ENCODE measurements at regions of chr15 and their contacts with region 1.

Region 1: GRCh38 chr15:74540761-74541493 is at the start of gene ARID3B:
- DNase-seq: peak; percentile 94 to 98
- H3K4me3 ChIP-seq: peak within 1 kb of the TSS; percentile 91
- H3K4me3 Mint-ChIP-seq: peak within 1 kb of the TSS; percentile 87
- H3K27ac Mint-ChIP-seq: peak within 1 kb of the TSS; percentile 86
- H3K4me1 ChIP-seq: peaks cover 12% of the 10 kb centered on the region
- H3K4me1 Mint-ChIP-seq: peaks cover 13% of the 10 kb centered on the region
- H3K27me3 ChIP-seq: no peaks in the 10 kb centered on the region
- H3K27me3 Mint-ChIP-seq: no peaks in the 10 kb centered on the region
- CTCF ChIP-seq: no peak
- total RNA-seq, gene ARID3B: 36.1 and 37.0 TPM in 2 replicates

Region 2: DNA sequence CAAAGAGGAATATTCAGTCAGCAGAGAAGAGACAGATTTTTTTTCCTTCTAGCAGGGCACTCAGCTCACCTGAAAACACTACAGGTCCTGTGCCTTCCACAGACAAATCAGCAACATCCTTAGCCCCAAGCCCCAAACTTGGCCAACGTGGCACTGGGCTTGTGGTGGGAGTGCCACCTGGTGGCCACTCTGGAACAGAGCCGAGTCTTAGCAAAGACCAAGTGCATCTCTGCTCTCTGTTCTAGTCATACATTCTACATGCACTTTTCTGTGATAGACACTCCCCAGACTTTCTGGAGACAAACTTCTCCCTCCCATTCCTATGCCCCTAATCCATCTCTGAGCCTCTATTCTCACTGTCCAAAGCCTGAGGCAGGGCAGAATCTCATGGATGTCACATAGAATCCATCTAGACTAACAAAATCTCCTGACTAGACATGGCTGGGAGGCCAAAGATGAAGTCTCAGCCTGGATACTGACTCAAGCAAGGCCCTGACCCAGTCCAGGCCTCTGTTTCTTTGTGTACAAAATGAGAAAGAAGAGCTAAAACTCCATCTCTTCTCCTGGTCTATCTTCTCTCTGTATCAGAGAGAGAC is 102.1 kb before region 1 on chr15:
- CTCF ChIA-PET with region 1: no interaction called
- POLR2A ChIA-PET with region 1: interaction called, 6 read pairs
- intact Hi-C with region 1: loop called (anchors 5 kb)
- DNase-seq: peak; percentile 77 to 81
- H3K4me3 ChIP-seq: no peak overlapping the region
- H3K4me3 Mint-ChIP-seq: no peak overlapping the region
- H3K27ac Mint-ChIP-seq: peak overlapping the region; percentile 90
- H3K4me1 ChIP-seq: peaks cover 45% of the 10 kb centered on the region
- H3K4me1 Mint-ChIP-seq: peaks cover 45% of the 10 kb centered on the region
- H3K27me3 ChIP-seq: no peaks in the 10 kb centered on the region
- H3K27me3 Mint-ChIP-seq: no peaks in the 10 kb centered on the region
- CTCF ChIP-seq: peak; percentile 81 to 92

Region 3: DNA sequence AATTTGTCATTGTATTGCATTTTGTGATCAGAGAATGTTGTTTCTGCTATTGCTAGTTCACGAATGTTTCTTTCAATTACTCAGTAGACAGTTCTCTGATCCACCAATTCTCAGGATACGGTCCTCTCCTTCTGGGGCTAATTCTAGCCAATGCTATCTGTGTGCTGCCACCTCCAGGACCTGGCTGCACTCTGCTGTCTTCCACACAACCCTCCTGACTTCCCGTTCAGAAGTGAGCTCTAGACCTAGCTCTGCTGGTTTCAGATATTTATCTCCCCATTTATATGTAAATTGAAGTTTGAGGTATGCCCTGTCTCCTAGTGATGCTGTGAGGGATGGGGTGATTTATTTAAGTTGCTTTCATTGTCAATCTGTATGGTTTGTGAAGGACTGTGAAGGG is 58.3 kb before region 1 on chr15:
- CTCF ChIA-PET with region 1: interaction called, 10 read pairs
- POLR2A ChIA-PET with region 1: no interaction called
- intact Hi-C with region 1: no loop called
- DNase-seq: peak in 1 of 2 experiments; percentile 24
- H3K4me3 ChIP-seq: no peak overlapping the region
- H3K4me3 Mint-ChIP-seq: no peak overlapping the region
- H3K27ac Mint-ChIP-seq: no peak overlapping the region
- H3K4me1 ChIP-seq: no peaks in the 10 kb centered on the region
- H3K4me1 Mint-ChIP-seq: no peaks in the 10 kb centered on the region
- H3K27me3 ChIP-seq: no peaks in the 10 kb centered on the region
- H3K27me3 Mint-ChIP-seq: no peaks in the 10 kb centered on the region
- CTCF ChIP-seq: peak; percentile 11 to 40

Region 4: GRCh38 chr15:74598126-74598842 is 57.4 kb after region 1 on chr15:
- CTCF ChIA-PET with region 1: no interaction called
- POLR2A ChIA-PET with region 1: interaction called, 6 read pairs
- intact Hi-C with region 1: loop called (anchors 2 kb)
- DNase-seq: peak; percentile 93 to 94
- H3K4me3 ChIP-seq: peak overlapping the region; percentile 53
- H3K4me3 Mint-ChIP-seq: peak overlapping the region; percentile 88
- H3K27ac Mint-ChIP-seq: peak overlapping the region; percentile 91
- H3K4me1 ChIP-seq: peaks cover 10% of the 10 kb centered on the region
- H3K4me1 Mint-ChIP-seq: peaks cover 11% of the 10 kb centered on the region
- H3K27me3 ChIP-seq: no peaks in the 10 kb centered on the region
- H3K27me3 Mint-ChIP-seq: no peaks in the 10 kb centered on the region
- CTCF ChIP-seq: no peak

Region 5: GRCh38 chr15:74674119-74674518 is 133.2 kb after region 1 on chr15:
- CTCF ChIA-PET with region 1: no interaction called
- POLR2A ChIA-PET with region 1: no interaction called
- intact Hi-C with region 1: no loop called
- DNase-seq: peak in 1 of 2 experiments; percentile 9
- H3K4me3 ChIP-seq: no peak overlapping the region
- H3K4me3 Mint-ChIP-seq: no peak overlapping the region
- H3K27ac Mint-ChIP-seq: peak overlapping the region; percentile 30
- H3K4me1 ChIP-seq: peaks cover 4% of the 10 kb centered on the region; the same call in 1 of the 2 replicates
- H3K4me1 Mint-ChIP-seq: peaks cover 12% of the 10 kb centered on the region
- H3K27me3 ChIP-seq: no peaks in the 10 kb centered on the region
- H3K27me3 Mint-ChIP-seq: no peaks in the 10 kb centered on the region
- CTCF ChIP-seq: no peak